Ovary (tissue), 10 donors: ENCODE measurements at regions of chr3 and their contacts with region 1.

Region 1: GRCh38 chr3:108538083-108538482 is 27.7 kb upstream of the MYH15 start:
- DNase-seq: no peak
- H3K4me3 ChIP-seq: no peak overlapping the region
- H3K27ac ChIP-seq: no peak overlapping the region
- H3K4me1 ChIP-seq: no peaks in the 10 kb centered on the region
- H3K27me3 ChIP-seq: no peaks in the 10 kb centered on the region
- CTCF ChIP-seq: no peak
- EP300 ChIP-seq: no peak
- POLR2A ChIP-seq: no peak

Region 2: GRCh38 chr3:108359011-108359410 is 179.1 kb before region 1 on chr3:
- intact Hi-C with region 1: loop called in 1 of 4 experiments (anchors 10 kb)
- DNase-seq: no peak
- H3K4me3 ChIP-seq: no peak overlapping the region
- H3K27ac ChIP-seq: no peak overlapping the region
- H3K4me1 ChIP-seq: no peaks in the 10 kb centered on the region
- H3K27me3 ChIP-seq: no peaks in the 10 kb centered on the region
- CTCF ChIP-seq: no peak
- EP300 ChIP-seq: no peak
- POLR2A ChIP-seq: no peak

Region 3: GRCh38 chr3:108448593-108448992 is 89.5 kb before region 1 on chr3:
- intact Hi-C with region 1: no loop called
- DNase-seq: no peak
- H3K4me3 ChIP-seq: no peak overlapping the region
- H3K27ac ChIP-seq: no peak overlapping the region
- H3K4me1 ChIP-seq: no peaks in the 10 kb centered on the region
- H3K27me3 ChIP-seq: no peaks in the 10 kb centered on the region
- CTCF ChIP-seq: no peak
- EP300 ChIP-seq: no peak
- POLR2A ChIP-seq: no peak

Region 4: GRCh38 chr3:108775649-108776048 is 237.6 kb after region 1 on chr3:
- intact Hi-C with region 1: no loop called
- DNase-seq: no peak
- H3K4me3 ChIP-seq: no peak overlapping the region
- H3K27ac ChIP-seq: no peak overlapping the region
- H3K4me1 ChIP-seq: no peaks in the 10 kb centered on the region
- H3K27me3 ChIP-seq: no peaks in the 10 kb centered on the region
- CTCF ChIP-seq: no peak
- EP300 ChIP-seq: no peak
- POLR2A ChIP-seq: no peak